Vagina (tissue), 2 donors: ENCODE measurements at regions of chr2 and their contacts with region 1.

Region 1: GRCh38 chr2:112749755-112750559 is 14.5 kb downstream of the CKAP2L start:
- DNase-seq: no peak
- H3K4me3 ChIP-seq: no peak overlapping the region
- H3K27ac ChIP-seq: no peak overlapping the region
- H3K4me1 ChIP-seq: no peaks in the 10 kb centered on the region
- H3K27me3 ChIP-seq: no peaks in the 10 kb centered on the region
- CTCF ChIP-seq: peak; percentile 72 to 83 (median 77)
- POLR2A ChIP-seq: no peak

Region 2: GRCh38 chr2:112821142-112821541 is 71.2 kb after region 1 on chr2:
- intact Hi-C with region 1: no loop called
- DNase-seq: no peak
- H3K4me3 ChIP-seq: no peak overlapping the region
- H3K27ac ChIP-seq: no peak overlapping the region
- H3K4me1 ChIP-seq: no peaks in the 10 kb centered on the region
- H3K27me3 ChIP-seq: no peaks in the 10 kb centered on the region
- CTCF ChIP-seq: no peak
- POLR2A ChIP-seq: no peak

Region 3: DNA sequence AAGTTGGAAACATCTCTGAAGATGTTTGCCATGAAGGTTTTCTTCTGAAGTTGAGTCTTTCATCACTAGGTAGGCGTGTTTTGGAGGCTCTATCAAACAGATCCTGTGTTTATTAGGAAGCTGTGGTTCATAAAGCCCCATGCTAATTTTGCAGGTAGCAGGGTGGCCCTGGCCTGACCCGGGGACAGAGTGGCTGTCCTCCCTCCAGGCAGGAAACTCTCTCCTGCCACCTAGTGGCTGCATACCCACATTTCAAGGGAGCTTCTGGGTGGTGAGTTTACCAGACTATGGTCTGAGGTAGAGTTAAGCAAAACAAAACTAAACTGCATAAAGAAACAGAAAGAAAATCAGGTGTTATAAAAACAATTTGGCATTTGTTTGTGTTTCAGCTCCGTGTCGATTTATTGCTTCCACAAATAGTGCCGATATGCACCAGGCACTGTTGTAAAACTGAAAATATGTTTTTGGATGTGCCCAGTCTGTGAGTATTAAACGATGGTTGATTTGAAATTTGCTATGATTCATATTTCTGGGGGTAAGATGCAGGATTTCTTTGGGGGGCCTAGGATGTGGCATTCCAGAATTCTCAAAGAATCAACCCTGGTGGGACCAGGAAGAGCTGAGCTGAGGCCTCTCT is 135.0 kb after region 1 on chr2:
- intact Hi-C with region 1: loop called (anchors 5 kb)
- DNase-seq: no peak
- H3K4me3 ChIP-seq: no peak overlapping the region
- H3K27ac ChIP-seq: no peak overlapping the region
- H3K4me1 ChIP-seq: no peaks in the 10 kb centered on the region
- H3K27me3 ChIP-seq: no peaks in the 10 kb centered on the region
- CTCF ChIP-seq: peak in 2 of 3 experiments; percentile 36 to 49
- POLR2A ChIP-seq: no peak

Region 4: DNA sequence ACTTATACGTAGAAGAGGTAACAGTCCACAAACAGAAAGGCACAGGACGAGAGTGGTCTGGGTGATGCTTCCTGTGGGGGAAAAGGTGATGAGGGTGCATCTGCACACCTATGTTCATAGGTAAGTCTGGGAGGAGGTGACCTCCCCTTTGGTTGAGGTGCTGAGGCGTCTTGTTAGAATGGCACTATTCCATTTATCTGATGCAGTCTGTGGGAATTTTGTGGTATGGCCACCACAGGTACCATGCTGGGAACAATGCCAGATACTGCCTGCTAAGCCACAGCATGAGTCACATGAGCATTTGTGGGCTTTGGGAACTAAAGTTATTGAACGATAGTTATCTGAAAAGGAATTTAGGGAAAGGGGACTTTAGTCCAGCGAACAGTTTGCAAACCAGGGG is 188.9 kb after region 1 on chr2:
- intact Hi-C with region 1: loop called (anchors 10 kb)
- DNase-seq: peak in 1 of 2 donors; percentile 22
- H3K4me3 ChIP-seq: no peak overlapping the region
- H3K27ac ChIP-seq: no peak overlapping the region
- H3K4me1 ChIP-seq: no peaks in the 10 kb centered on the region
- H3K27me3 ChIP-seq: no peaks in the 10 kb centered on the region
- CTCF ChIP-seq: no peak
- POLR2A ChIP-seq: no peak